ENCODE measurements at regions of chr1 and their contacts with region 1.

Region 1: DNA sequence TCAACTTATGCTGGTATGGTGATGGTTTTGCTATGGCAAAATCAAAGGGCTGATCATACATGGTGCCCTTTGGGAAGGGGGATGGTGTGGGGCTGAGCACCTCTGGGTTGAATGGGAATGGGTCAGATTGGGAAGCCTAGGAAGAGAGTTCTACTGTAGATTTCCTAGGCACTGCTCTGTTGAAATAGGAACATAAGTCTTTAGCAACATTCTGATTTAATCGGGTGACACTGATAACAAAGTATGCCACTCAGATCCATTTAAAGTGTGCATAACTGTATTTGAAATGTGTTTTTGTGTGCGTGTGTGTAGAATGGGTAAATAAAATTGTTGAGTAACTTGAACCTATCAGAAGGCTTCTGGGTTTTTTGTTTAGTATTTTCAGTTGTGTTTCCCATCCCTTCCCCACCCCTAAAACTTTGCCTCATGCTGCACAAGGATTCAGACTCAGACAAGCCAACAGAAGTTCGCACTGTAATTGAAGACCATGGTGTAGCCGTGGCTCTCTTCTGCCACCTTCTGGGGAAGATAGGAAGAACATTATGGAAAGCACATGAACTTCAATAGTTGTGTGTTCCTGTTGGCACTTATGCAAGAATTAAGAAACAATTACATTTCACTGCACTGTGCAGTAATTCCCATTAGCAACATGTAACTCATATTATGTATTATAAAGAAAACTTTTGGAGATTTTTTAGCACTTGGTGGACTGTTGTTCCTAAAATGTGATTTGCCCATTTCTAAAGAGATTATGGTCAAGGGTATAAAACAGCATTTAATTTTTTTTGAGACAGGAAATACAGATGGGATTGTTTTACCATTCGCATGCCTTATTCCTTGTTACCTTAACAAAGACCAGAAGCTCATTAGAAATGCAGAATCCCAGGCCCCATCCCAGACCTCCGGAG is 10.9 kb upstream of the C4BPB start:
- DNase-seq: peak; percentile 69 to 75 (median 72)
- H3K4me3 ChIP-seq: no peak overlapping the region
- H3K4me3 Mint-ChIP-seq: no peak overlapping the region
- H3K27ac ChIP-seq: no peak overlapping the region
- H3K27ac Mint-ChIP-seq: no peak overlapping the region
- H3K4me1 ChIP-seq: no peaks in the 10 kb centered on the region
- H3K4me1 Mint-ChIP-seq: peaks cover 0 to 2% (median under 1%) of the 10 kb centered on the region in 4 donors
- H3K27me3 ChIP-seq: no peaks in the 10 kb centered on the region
- H3K27me3 Mint-ChIP-seq: peaks cover 7 to 11% of the 10 kb centered on the region in 2 donors

Region 2: GRCh38 chr1:207004981-207005830 is 72.5 kb before region 1 on chr1:
- CTCF ChIA-PET with region 1: interaction called, 5 read pairs
- POLR2A ChIA-PET with region 1: no interaction called
- intact Hi-C with region 1: loop called (anchors 5 kb)
- DNase-seq: peak in 4 of 5 donors; percentile 13 to 26 (median 18)
- H3K4me3 ChIP-seq: no peak overlapping the region
- H3K4me3 Mint-ChIP-seq: no peak overlapping the region
- H3K27ac ChIP-seq: no peak overlapping the region
- H3K27ac Mint-ChIP-seq: peak overlapping the region in 2 of 7 donors; percentile 16 to 41
- H3K4me1 ChIP-seq: no peaks in the 10 kb centered on the region
- H3K4me1 Mint-ChIP-seq: peaks cover 0 to 4% (median 2%) of the 10 kb centered on the region in 4 donors
- H3K27me3 ChIP-seq: no peaks in the 10 kb centered on the region
- H3K27me3 Mint-ChIP-seq: peaks cover 14 to 15% of the 10 kb centered on the region in 2 donors

Region 3: GRCh38 chr1:207052911-207053769 is 24.6 kb before region 1 on chr1 and contains the start of gene PFKFB2:
- CTCF ChIA-PET with region 1: interaction called, 62 read pairs
- POLR2A ChIA-PET with region 1: interaction called, 3 read pairs
- intact Hi-C with region 1: loop called (anchors 1 kb)
- DNase-seq: peak; percentile 93 to 96 (median 95)
- H3K4me3 ChIP-seq: peak within 1 kb of the TSS; percentile 59 to 75
- H3K4me3 Mint-ChIP-seq: peak within 1 kb of the TSS; percentile 94 to 100 (median 98)
- H3K27ac ChIP-seq: peak within 1 kb of the TSS; percentile 52
- H3K27ac Mint-ChIP-seq: peak within 1 kb of the TSS; percentile 89 to 99 (median 95)
- H3K4me1 ChIP-seq: peaks cover 33% of the 10 kb centered on the region
- H3K4me1 Mint-ChIP-seq: peaks cover 25 to 58% (median 42%) of the 10 kb centered on the region in 4 donors
- H3K27me3 ChIP-seq: no peaks in the 10 kb centered on the region
- H3K27me3 Mint-ChIP-seq: peaks cover 0 to 2% of the 10 kb centered on the region in 2 donors
- total RNA-seq, gene PFKFB2: 1.4 to 1.9 TPM

Region 4: GRCh38 chr1:207115269-207115668 is 37.5 kb after region 1 on chr1:
- CTCF ChIA-PET with region 1: no interaction called
- POLR2A ChIA-PET with region 1: no interaction called
- intact Hi-C with region 1: no loop called
- DNase-seq: no peak
- H3K4me3 ChIP-seq: no peak overlapping the region
- H3K4me3 Mint-ChIP-seq: no peak overlapping the region
- H3K27ac ChIP-seq: no peak overlapping the region
- H3K27ac Mint-ChIP-seq: no peak overlapping the region
- H3K4me1 ChIP-seq: no peaks in the 10 kb centered on the region
- H3K4me1 Mint-ChIP-seq: no peaks in the 10 kb centered on the region
- H3K27me3 ChIP-seq: no peaks in the 10 kb centered on the region
- H3K27me3 Mint-ChIP-seq: peaks cover 5 to 21% of the 10 kb centered on the region in 2 donors